CD8-positive, alpha-beta memory T cell (primary cell): ENCODE measurements at regions of chr13 and their contacts with region 1.

Region 1: GRCh38 chr13:73765651-73766384 is 368.4 kb downstream of the KLF12 start:
- DNase-seq: peak; percentile 66 to 92 (median 79)
- H3K4me3 ChIP-seq: peak overlapping the region; percentile 48
- H3K4me3 Mint-ChIP-seq: peak overlapping the region; percentile 74 to 89 (median 84)
- H3K27ac ChIP-seq: peak overlapping the region; percentile 7
- H3K27ac Mint-ChIP-seq: peak overlapping the region; percentile 92 to 98 (median 96)
- H3K4me1 ChIP-seq: peaks cover 62% of the 10 kb centered on the region
- H3K4me1 Mint-ChIP-seq: peaks cover 74 to 91% (median 89%) of the 10 kb centered on the region in 3 donors
- H3K27me3 ChIP-seq: no peaks in the 10 kb centered on the region
- H3K27me3 Mint-ChIP-seq: no peaks in the 10 kb centered on the region

Region 2: DNA sequence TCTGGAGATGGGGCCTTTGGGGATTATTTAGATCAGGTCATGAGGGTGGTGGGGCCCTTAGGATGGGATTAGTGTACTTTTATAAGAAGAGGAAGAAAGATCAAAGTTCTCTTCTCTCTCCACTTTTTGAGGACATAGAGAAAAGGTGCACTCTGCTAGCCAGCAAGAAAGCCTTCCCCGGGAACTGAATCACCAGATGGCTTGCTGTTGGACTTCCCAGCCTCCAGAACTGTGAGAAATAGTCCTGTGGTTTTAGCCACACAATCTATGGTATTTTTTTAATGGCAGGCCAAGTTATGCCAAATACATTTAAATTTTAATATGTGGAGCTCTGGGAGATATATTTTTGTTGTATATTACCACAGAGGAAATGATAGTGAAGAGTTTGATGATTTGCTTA is 17.4 kb before region 1 on chr13:
- CTCF ChIA-PET with region 1: interaction called, 10 read pairs
- POLR2A ChIA-PET with region 1: no interaction called
- DNase-seq: no peak
- H3K4me3 ChIP-seq: no peak overlapping the region
- H3K4me3 Mint-ChIP-seq: no peak overlapping the region
- H3K27ac ChIP-seq: no peak overlapping the region
- H3K27ac Mint-ChIP-seq: no peak overlapping the region
- H3K4me1 ChIP-seq: peaks cover 7% of the 10 kb centered on the region
- H3K4me1 Mint-ChIP-seq: peaks cover 23 to 52% (median 52%) of the 10 kb centered on the region in 3 donors
- H3K27me3 ChIP-seq: no peaks in the 10 kb centered on the region
- H3K27me3 Mint-ChIP-seq: no peaks in the 10 kb centered on the region

Region 3: GRCh38 chr13:73754727-73755292 is 11.0 kb before region 1 on chr13:
- CTCF ChIA-PET with region 1: interaction called, 33 read pairs
- POLR2A ChIA-PET with region 1: interaction called, 6 read pairs
- DNase-seq: peak in 2 of 5 donors; percentile 33 to 62
- H3K4me3 ChIP-seq: no peak overlapping the region
- H3K4me3 Mint-ChIP-seq: no peak overlapping the region
- H3K27ac ChIP-seq: no peak overlapping the region
- H3K27ac Mint-ChIP-seq: peak overlapping the region in 7 of 8 donors; percentile 21 to 58 (median 51)
- H3K4me1 ChIP-seq: peaks cover 30% of the 10 kb centered on the region
- H3K4me1 Mint-ChIP-seq: peaks cover 38 to 69% (median 58%) of the 10 kb centered on the region in 3 donors
- H3K27me3 ChIP-seq: no peaks in the 10 kb centered on the region
- H3K27me3 Mint-ChIP-seq: no peaks in the 10 kb centered on the region